HCT116 (cell line): ENCODE measurements at regions of chr1 and their contacts with region 1.

Region 1: GRCh38 chr1:67685067-67685557 is at the start of gene GADD45A:
- DNase-seq: peak; percentile 98
- ATAC-seq: peak; percentile 88
- H3K4me3 ChIP-seq: peak within 1 kb of the TSS; percentile 91
- H3K27ac ChIP-seq: peak within 1 kb of the TSS; percentile 98
- H3K4me1 ChIP-seq: peaks cover 28 to 50% of the 10 kb centered on the region in 2 experiments
- H3K27me3 ChIP-seq: no peaks in the 10 kb centered on the region
- CTCF ChIP-seq: no peak
- POLR2A ChIP-seq: peak; percentile 99
- RAD21 ChIP-seq: 0 out of 2 replicates have a peak, but pooled peaks have one; percentile 24
- total RNA-seq, gene GADD45A: 105 TPM

Region 2: DNA sequence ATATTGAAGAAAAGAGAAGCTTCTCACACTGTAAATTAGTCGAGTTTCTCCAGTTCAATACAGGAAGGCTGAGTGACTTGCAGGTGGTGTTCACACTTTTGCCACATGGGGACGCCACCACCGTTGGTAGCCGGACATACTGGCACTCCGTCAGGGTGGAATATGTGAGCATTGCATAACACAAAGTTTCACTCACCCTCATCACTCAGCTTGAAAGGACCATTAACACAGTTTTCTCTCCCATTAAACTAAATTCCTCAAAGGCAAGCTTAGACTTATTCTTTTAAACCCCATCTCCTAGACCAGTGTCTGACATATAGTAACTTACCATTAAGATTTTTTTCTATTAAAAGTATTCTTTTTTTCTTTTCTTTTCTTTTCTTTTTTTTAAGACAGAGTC is 149.6 kb before region 1 on chr1:
- CTCF ChIA-PET with region 1: interaction called, 3 read pairs
- POLR2A ChIA-PET with region 1: interaction called, 15 read pairs
- RAD21 ChIA-PET with region 1: interaction called, 4 to 6 read pairs
- intact Hi-C with region 1: loop called (anchors 1 kb)
- DNase-seq: peak; percentile 69
- ATAC-seq: peak; percentile 87
- H3K4me3 ChIP-seq: no peak overlapping the region
- H3K27ac ChIP-seq: no peak overlapping the region
- H3K4me1 ChIP-seq: no peaks in the 10 kb centered on the region
- H3K27me3 ChIP-seq: no peaks in the 10 kb centered on the region
- CTCF ChIP-seq: peak; percentile 88 to 99 (median 97)
- POLR2A ChIP-seq: no peak
- RAD21 ChIP-seq: peak; percentile 95

Region 3: GRCh38 chr1:67674260-67675011 is 10.7 kb before region 1 on chr1:
- CTCF ChIA-PET with region 1: interaction called, 10 read pairs
- POLR2A ChIA-PET with region 1: interaction called, 11 read pairs
- RAD21 ChIA-PET with region 1: no interaction called
- intact Hi-C with region 1: no loop called
- DNase-seq: no peak
- ATAC-seq: no peak
- H3K4me3 ChIP-seq: no peak overlapping the region
- H3K27ac ChIP-seq: no peak overlapping the region
- H3K4me1 ChIP-seq: peaks cover 0 to 3% of the 10 kb centered on the region in 2 experiments; a peak in 1 of 4 replicates
- H3K27me3 ChIP-seq: no peaks in the 10 kb centered on the region
- CTCF ChIP-seq: no peak
- POLR2A ChIP-seq: no peak
- RAD21 ChIP-seq: no peak

Region 4: GRCh38 chr1:67748630-67749029 is 63.5 kb after region 1 on chr1:
- CTCF ChIA-PET with region 1: no interaction called
- POLR2A ChIA-PET with region 1: interaction called, 14 read pairs
- RAD21 ChIA-PET with region 1: interaction called in 1 of 2 experiments, 3 read pairs
- intact Hi-C with region 1: loop called (anchors 2 kb)
- DNase-seq: no peak
- ATAC-seq: no peak
- H3K4me3 ChIP-seq: peak overlapping the region in 1 of 2 experiments; percentile 46; a peak in 2 of 4 replicates
- H3K27ac ChIP-seq: peak overlapping the region; percentile 84; the same call in 1 of the 2 replicates
- H3K4me1 ChIP-seq: peaks cover 54 to 66% of the 10 kb centered on the region in 2 experiments
- H3K27me3 ChIP-seq: no peaks in the 10 kb centered on the region
- CTCF ChIP-seq: no peak
- POLR2A ChIP-seq: no peak
- RAD21 ChIP-seq: no peak

Region 5: DNA sequence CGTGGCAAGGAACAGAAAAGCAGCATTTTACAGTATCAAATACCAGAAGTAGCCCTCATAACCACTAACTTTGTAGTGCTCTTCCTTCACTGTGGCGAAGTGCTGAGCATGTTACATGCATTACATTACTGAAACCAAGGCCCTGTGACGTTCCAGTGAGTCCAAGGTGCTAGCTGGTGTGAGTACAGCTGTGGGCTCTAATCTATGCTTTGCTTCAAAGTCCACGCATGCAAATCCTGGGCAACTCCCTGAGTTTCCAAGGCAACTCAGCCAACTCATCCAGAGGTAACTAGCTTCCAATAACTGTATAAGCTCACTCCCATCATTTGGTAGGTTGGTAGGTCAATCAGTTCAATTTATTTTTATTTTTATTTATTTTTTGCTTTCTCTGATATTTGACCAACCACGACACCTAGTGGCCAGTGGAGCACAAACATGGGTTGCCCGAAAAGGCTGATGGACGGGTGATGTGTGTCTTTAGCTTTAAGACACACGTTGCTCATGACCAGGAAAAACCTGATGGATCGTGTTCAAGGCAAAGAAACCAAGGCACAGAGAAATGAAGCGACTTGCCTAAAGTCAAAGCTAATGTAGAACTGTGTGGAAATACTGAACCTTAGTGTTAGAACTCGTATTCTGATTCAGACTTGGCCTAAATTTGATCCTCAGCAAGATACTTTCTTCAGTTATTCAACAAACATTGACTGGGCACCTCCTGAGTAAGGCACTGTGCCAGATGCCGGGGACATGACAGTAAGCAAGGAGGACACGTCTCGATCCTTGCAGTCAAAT is 75.1 kb after region 1 on chr1:
- CTCF ChIA-PET with region 1: interaction called, 14 read pairs
- POLR2A ChIA-PET with region 1: interaction called, 14 read pairs
- RAD21 ChIA-PET with region 1: interaction called, 3 to 10 read pairs
- intact Hi-C with region 1: no loop called
- DNase-seq: peak; percentile 54
- ATAC-seq: peak; percentile 91
- H3K4me3 ChIP-seq: no peak overlapping the region
- H3K27ac ChIP-seq: no peak overlapping the region
- H3K4me1 ChIP-seq: peaks cover 8 to 17% of the 10 kb centered on the region in 2 experiments; a peak in 3 of 4 replicates
- H3K27me3 ChIP-seq: no peaks in the 10 kb centered on the region
- CTCF ChIP-seq: peak; percentile 74 to 93 (median 79)
- POLR2A ChIP-seq: no peak
- RAD21 ChIP-seq: peak; percentile 97

Region 6: DNA sequence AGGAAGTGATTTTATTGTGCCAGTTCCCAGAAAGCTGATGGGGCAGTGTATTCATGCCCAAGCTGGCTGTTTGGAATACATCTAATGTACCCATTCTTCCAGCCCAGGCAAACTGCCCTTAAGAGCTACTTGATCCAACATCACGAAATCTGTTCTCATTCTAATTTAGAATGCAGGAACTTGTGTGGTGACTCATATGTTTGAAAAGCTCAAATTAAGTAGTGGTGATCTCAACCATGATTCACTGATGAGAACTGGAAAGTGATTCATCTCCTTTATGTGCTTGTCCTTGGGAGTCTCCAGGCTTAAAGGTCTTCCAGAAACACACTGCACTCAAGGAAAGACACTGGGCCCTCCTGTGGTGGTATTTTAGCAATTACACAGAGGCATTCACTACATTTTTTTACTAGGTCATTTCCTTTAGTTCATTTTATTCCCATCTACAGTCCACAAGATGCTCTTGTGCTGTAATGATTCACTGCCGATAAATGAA is 699.3 kb after region 1 on chr1:
- CTCF ChIA-PET with region 1: no interaction called
- POLR2A ChIA-PET with region 1: interaction called, 6 read pairs
- RAD21 ChIA-PET with region 1: no interaction called
- intact Hi-C with region 1: loop called (anchors 10 kb)
- DNase-seq: peak; percentile 99
- ATAC-seq: peak; percentile 80
- H3K4me3 ChIP-seq: peak overlapping the region; percentile 12 to 69
- H3K27ac ChIP-seq: peak overlapping the region; percentile 91
- H3K4me1 ChIP-seq: peaks cover 46 to 66% of the 10 kb centered on the region in 2 experiments
- H3K27me3 ChIP-seq: no peaks in the 10 kb centered on the region
- CTCF ChIP-seq: peak; percentile 35 to 48 (median 47); a peak in 5 of 6 replicates
- POLR2A ChIP-seq: no peak
- RAD21 ChIP-seq: peak; percentile 61